ENCODE measurements at regions of chr7 and their contacts with region 1.

Region 1: GRCh38 chr7:12423355-12423994 is 19.8 kb upstream of the VWDE start:
- DNase-seq: no peak
- H3K4me3 Mint-ChIP-seq: peak overlapping the region; percentile 59
- H3K27ac Mint-ChIP-seq: peak overlapping the region; percentile 58
- H3K4me1 Mint-ChIP-seq: peaks cover 22% of the 10 kb centered on the region
- H3K27me3 Mint-ChIP-seq: no peaks in the 10 kb centered on the region
- CTCF ChIP-seq: no peak

Region 2: GRCh38 chr7:12389089-12389700 is 34.3 kb before region 1 on chr7:
- CTCF ChIA-PET with region 1: no interaction called
- intact Hi-C with region 1: loop called (anchors 5 kb)
- DNase-seq: peak; percentile 73
- H3K4me3 Mint-ChIP-seq: no peak overlapping the region
- H3K27ac Mint-ChIP-seq: no peak overlapping the region
- H3K4me1 Mint-ChIP-seq: peaks cover 18% of the 10 kb centered on the region
- H3K27me3 Mint-ChIP-seq: no peaks in the 10 kb centered on the region
- CTCF ChIP-seq: peak; percentile 82

Region 3: GRCh38 chr7:12409097-12409711 is 14.3 kb before region 1 on chr7:
- CTCF ChIA-PET with region 1: interaction called, 3 read pairs
- intact Hi-C with region 1: loop called (anchors 2 kb)
- DNase-seq: no peak
- H3K4me3 Mint-ChIP-seq: no peak overlapping the region
- H3K27ac Mint-ChIP-seq: no peak overlapping the region
- H3K4me1 Mint-ChIP-seq: peaks cover 5% of the 10 kb centered on the region
- H3K27me3 Mint-ChIP-seq: no peaks in the 10 kb centered on the region
- CTCF ChIP-seq: no peak

Region 4: DNA sequence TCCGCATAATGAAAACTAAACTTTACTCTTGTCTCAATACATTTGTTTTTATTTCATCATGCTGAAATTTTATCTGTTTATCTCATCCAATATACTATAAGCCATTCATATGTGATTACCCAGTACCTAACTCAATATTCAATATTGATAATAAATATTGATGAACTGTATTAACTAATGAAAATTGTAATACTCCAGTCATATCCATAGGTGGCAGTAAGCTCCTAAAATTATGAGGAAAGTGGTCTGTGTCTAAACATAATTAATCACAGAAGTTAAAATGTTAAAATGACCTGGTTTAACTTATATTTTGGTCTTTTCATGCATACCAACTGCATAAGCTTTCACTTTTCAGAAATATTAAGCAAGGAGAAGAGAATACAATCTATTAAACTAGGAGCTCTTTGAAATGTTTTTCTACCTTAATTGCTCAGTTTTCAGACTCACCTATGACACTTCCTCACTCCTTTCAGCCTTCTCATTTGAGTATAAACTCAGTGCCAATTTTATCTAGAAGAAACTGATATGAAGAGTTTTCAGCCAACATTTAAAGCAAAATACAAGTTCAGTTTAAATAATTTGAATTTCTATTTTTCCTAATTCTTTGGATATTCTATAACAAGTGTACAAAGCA is 10.7 kb after region 1 on chr7:
- CTCF ChIA-PET with region 1: interaction called, 21 read pairs
- intact Hi-C with region 1: no loop called
- DNase-seq: no peak
- H3K4me3 Mint-ChIP-seq: no peak overlapping the region
- H3K27ac Mint-ChIP-seq: no peak overlapping the region
- H3K4me1 Mint-ChIP-seq: no peaks in the 10 kb centered on the region
- H3K27me3 Mint-ChIP-seq: no peaks in the 10 kb centered on the region
- CTCF ChIP-seq: peak; percentile 61

Region 5: GRCh38 chr7:12469568-12469967 is 46.1 kb after region 1 on chr7:
- CTCF ChIA-PET with region 1: no interaction called
- intact Hi-C with region 1: no loop called
- DNase-seq: no peak
- H3K4me3 Mint-ChIP-seq: no peak overlapping the region
- H3K27ac Mint-ChIP-seq: no peak overlapping the region
- H3K4me1 Mint-ChIP-seq: no peaks in the 10 kb centered on the region
- H3K27me3 Mint-ChIP-seq: no peaks in the 10 kb centered on the region
- CTCF ChIP-seq: no peak

Measured in Calu3 (cell line).